ENCODE measurements at regions of chr4 and their contacts with region 1.

Region 1: DNA sequence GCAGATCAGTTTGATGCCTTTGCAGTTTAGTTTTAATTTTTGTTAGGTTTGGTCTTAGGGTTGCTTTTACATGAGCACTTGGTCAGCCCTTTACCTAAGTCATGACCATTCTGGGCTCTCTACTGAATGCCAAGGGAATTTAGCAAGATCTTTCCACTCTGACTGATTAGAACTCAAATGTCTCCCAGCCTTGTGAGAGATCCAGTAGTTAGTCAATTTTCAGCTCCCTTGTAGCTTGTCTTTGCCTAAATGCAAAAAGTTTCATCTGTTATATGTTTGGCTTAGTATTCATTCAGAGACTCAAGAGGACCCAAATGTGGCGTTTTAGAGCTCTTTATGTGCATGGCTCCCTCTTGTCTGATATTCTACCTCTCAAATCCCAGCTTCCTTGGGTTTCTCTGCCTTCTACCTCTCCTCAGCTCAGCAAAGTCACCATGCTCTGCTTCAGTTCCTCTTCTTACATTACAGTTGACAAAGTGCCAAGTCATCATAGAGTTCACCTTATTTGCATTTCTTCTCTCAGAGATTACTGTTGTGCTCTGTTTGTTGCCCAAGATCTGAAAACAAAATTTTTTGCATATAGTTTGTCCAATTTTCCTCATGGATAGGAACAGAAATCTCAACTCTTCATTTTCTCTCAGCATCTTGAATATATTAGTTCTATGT is 17.5 kb upstream of the JAKMIP1 start:
- DNase-seq: no peak
- H3K4me3 ChIP-seq: no peak overlapping the region
- H3K27ac ChIP-seq: no peak overlapping the region
- H3K4me1 ChIP-seq: no peaks in the 10 kb centered on the region
- H3K27me3 ChIP-seq: peaks cover 3 to 34% of the 10 kb centered on the region in 2 donors
- CTCF ChIP-seq: no peak
- POLR2A ChIP-seq: no peak

Region 2: DNA sequence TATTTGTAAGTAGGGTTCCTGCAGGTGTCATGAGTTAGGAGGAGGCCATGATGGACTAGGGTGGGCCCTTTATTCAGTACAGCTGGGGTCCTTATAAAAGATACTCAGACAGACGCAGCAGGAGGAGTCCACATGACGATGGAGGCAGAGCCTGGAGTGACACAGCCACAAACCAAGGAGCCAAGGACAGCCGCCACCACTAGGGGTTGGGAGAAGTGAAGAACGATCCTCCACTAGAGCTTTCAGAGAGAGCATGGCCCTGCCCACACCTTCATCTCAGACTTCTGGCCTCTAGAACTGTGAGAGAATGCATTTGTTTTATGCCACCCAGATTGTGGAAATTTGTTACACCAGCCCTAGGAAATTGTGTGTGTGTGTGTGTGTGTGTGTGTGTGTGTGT is 48.6 kb before region 1 on chr4:
- intact Hi-C with region 1: no loop called
- DNase-seq: no peak
- H3K4me3 ChIP-seq: no peak overlapping the region
- H3K27ac ChIP-seq: no peak overlapping the region
- H3K4me1 ChIP-seq: no peaks in the 10 kb centered on the region
- H3K27me3 ChIP-seq: no peaks in the 10 kb centered on the region
- CTCF ChIP-seq: no peak
- POLR2A ChIP-seq: no peak

Region 3: DNA sequence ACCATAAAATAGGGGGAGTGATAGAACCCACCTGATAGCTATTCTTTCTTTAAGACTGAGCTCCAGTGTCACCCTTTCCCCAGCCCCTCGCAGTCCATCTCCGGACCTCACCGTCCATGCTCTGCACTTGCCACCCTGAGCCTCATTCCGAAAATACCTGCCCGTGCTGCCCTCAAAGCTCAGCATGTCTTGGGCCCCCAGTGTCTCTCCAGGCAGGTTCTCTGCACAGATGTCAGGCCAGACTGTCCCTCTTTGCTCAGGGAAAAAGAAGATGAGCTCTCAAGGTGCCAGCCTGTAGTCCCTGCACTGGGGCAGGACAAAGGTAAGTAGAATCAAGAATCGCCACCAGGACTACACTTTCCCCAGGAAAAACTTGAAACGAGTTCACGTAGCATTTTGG is 42.0 kb after region 1 on chr4:
- intact Hi-C with region 1: loop called (anchors 2 kb)
- DNase-seq: no peak
- H3K4me3 ChIP-seq: no peak overlapping the region
- H3K27ac ChIP-seq: no peak overlapping the region
- H3K4me1 ChIP-seq: no peaks in the 10 kb centered on the region
- H3K27me3 ChIP-seq: peaks cover 0 to 5% of the 10 kb centered on the region in 2 donors
- CTCF ChIP-seq: no peak
- POLR2A ChIP-seq: no peak

Measured in breast epithelium (tissue), 4 donors.